ENCODE measurements at regions of chr1 and their contacts with region 1.

Region 1: GRCh38 chr1:17661546-17662157 is 93.5 kb upstream of the ACTL8 start:
- DNase-seq: peak; percentile 60
- ATAC-seq: peak; percentile 85
- H3K4me3 ChIP-seq: no peak overlapping the region
- H3K27ac ChIP-seq: no peak overlapping the region
- H3K4me1 ChIP-seq: no peaks in the 10 kb centered on the region
- H3K27me3 ChIP-seq: no peaks in the 10 kb centered on the region
- CTCF ChIP-seq: peak; percentile 92

Region 2: GRCh38 chr1:17674716-17675500 is 13.3 kb after region 1 on chr1:
- CTCF ChIA-PET with region 1: no interaction called
- POLR2A ChIA-PET with region 1: no interaction called
- intact Hi-C with region 1: no loop called
- DNase-seq: no peak
- ATAC-seq: no peak
- H3K4me3 ChIP-seq: no peak overlapping the region
- H3K27ac ChIP-seq: no peak overlapping the region
- H3K4me1 ChIP-seq: no peaks in the 10 kb centered on the region
- H3K27me3 ChIP-seq: no peaks in the 10 kb centered on the region
- CTCF ChIP-seq: no peak

Region 3: GRCh38 chr1:17826165-17826488 is 164.5 kb after region 1 on chr1:
- CTCF ChIA-PET with region 1: interaction called, 3 read pairs
- POLR2A ChIA-PET with region 1: no interaction called
- intact Hi-C with region 1: loop called (anchors 1 kb)
- DNase-seq: peak; percentile 45
- ATAC-seq: peak; percentile 61; the same call in 1 of the 2 replicates
- H3K4me3 ChIP-seq: no peak overlapping the region
- H3K27ac ChIP-seq: no peak overlapping the region
- H3K4me1 ChIP-seq: no peaks in the 10 kb centered on the region
- H3K27me3 ChIP-seq: peaks cover 55% of the 10 kb centered on the region
- CTCF ChIP-seq: peak; percentile 73

Region 4: GRCh38 chr1:18581420-18581880 is 919.8 kb after region 1 on chr1:
- CTCF ChIA-PET with region 1: no interaction called
- POLR2A ChIA-PET with region 1: no interaction called
- intact Hi-C with region 1: loop called (anchors 5 kb)
- DNase-seq: peak; percentile 41
- ATAC-seq: peak; percentile 54; the same call in 1 of the 2 replicates
- H3K4me3 ChIP-seq: no peak overlapping the region
- H3K27ac ChIP-seq: no peak overlapping the region
- H3K4me1 ChIP-seq: no peaks in the 10 kb centered on the region; the same call in 1 of the 2 replicates
- H3K27me3 ChIP-seq: no peaks in the 10 kb centered on the region
- CTCF ChIP-seq: peak; percentile 70

Measured in PC-3 (cell line).